Activated CD8-positive, alpha-beta memory T cell treated with anti-CD3 and anti-CD28 coated beads, Interleukin-2, amount 10 ng/mL, durations not matched to agents 7 days and 5 days (primary cell): ENCODE measurements at regions of chr19 and their contacts with region 1.

Region 1: GRCh38 chr19:11380653-11381534 is 3.2 kb downstream of the EPOR start:
- DNase-seq: peak; percentile 99
- ATAC-seq: peak; percentile 83
- H3K4me3 Mint-ChIP-seq: peak overlapping the region; percentile 81
- H3K27ac Mint-ChIP-seq: peak overlapping the region; percentile 97
- H3K4me1 Mint-ChIP-seq: peaks cover 39% of the 10 kb centered on the region
- H3K27me3 Mint-ChIP-seq: peaks cover 19% of the 10 kb centered on the region

Region 2: GRCh38 chr19:11324079-11324661 is 56.7 kb before region 1 on chr19:
- CTCF ChIA-PET with region 1: interaction called, 28 read pairs
- DNase-seq: peak; percentile 86
- ATAC-seq: peak; percentile 89
- H3K4me3 Mint-ChIP-seq: peak overlapping the region; percentile 60
- H3K27ac Mint-ChIP-seq: peak overlapping the region; percentile 92
- H3K4me1 Mint-ChIP-seq: peaks cover 30% of the 10 kb centered on the region
- H3K27me3 Mint-ChIP-seq: peaks cover 3% of the 10 kb centered on the region

Region 3: DNA sequence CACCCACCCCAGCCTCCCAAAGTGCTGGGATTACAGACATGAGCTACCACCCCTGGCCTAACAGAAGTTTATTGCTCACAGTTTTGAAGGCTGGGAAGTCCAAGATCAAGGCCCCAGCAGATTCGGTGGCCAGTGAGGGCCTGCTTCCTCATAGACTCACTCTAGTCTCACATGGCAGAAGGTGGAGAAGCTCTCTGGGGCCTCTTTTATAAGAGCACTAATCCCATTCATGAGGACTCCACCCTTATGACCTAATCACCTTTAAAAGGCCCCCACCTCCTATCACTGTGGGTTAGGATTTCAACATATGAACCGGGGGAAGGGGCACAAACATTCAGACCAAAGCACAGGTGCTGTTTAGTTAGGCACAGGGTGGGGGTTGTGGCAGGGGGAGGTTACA is 13.4 kb before region 1 on chr19:
- CTCF ChIA-PET with region 1: interaction called, 16 read pairs
- DNase-seq: no peak
- ATAC-seq: no peak
- H3K4me3 Mint-ChIP-seq: no peak overlapping the region
- H3K27ac Mint-ChIP-seq: no peak overlapping the region
- H3K4me1 Mint-ChIP-seq: no peaks in the 10 kb centered on the region
- H3K27me3 Mint-ChIP-seq: no peaks in the 10 kb centered on the region

Region 4: GRCh38 chr19:11422163-11423021 is 41.5 kb after region 1 on chr19:
- CTCF ChIA-PET with region 1: interaction called, 61 read pairs
- DNase-seq: peak; percentile 92
- ATAC-seq: peak; percentile 73
- H3K4me3 Mint-ChIP-seq: peak overlapping the region; percentile 59
- H3K27ac Mint-ChIP-seq: no peak overlapping the region
- H3K4me1 Mint-ChIP-seq: peaks cover 28% of the 10 kb centered on the region
- H3K27me3 Mint-ChIP-seq: peaks cover 61% of the 10 kb centered on the region

Region 5: DNA sequence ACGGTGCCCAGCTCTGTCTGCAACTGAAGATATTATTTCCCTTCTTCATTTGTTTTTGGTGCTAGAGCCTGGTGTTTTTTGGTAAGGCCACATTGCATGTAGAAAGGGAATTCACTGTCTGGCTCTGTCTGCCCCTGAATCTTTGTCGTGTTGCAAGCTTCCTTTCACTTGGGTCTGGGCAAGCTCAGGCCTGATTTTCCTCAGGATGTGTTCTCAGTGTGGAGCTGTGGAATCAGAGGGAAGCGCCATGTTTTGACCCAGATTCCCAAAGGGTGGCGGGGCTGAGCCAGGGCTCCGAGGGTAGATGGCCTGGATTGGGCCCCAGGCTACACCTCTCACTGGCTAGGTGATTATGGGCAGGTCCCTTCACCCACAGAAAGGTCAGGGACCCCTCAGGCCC is 63.2 kb after region 1 on chr19:
- CTCF ChIA-PET with region 1: interaction called, 11 read pairs
- DNase-seq: no peak
- ATAC-seq: no peak
- H3K4me3 Mint-ChIP-seq: no peak overlapping the region
- H3K27ac Mint-ChIP-seq: no peak overlapping the region
- H3K4me1 Mint-ChIP-seq: peaks cover 4% of the 10 kb centered on the region
- H3K27me3 Mint-ChIP-seq: no peaks in the 10 kb centered on the region